HEK293 (cell line): ENCODE measurements at regions of chr19 and their contacts with region 1.

Region 1: GRCh38 chr19:36060430-36060829 is 5.7 kb downstream of the WDR62 start:
- H3K4me3 ChIP-seq: no peak overlapping the region
- H3K27ac ChIP-seq: peak overlapping the region; percentile 21; the same call in 1 of the 2 replicates
- H3K4me1 ChIP-seq: peaks cover 23% of the 10 kb centered on the region
- CTCF ChIP-seq: peak; percentile 97

Region 2: GRCh38 chr19:35925501-35925900 is 134.9 kb before region 1 on chr19:
- CTCF ChIA-PET with region 1: no interaction called
- POLR2A ChIA-PET with region 1: no interaction called
- H3K4me3 ChIP-seq: no peak overlapping the region
- H3K27ac ChIP-seq: no peak overlapping the region
- H3K4me1 ChIP-seq: no peaks in the 10 kb centered on the region
- CTCF ChIP-seq: no peak

Region 3: DNA sequence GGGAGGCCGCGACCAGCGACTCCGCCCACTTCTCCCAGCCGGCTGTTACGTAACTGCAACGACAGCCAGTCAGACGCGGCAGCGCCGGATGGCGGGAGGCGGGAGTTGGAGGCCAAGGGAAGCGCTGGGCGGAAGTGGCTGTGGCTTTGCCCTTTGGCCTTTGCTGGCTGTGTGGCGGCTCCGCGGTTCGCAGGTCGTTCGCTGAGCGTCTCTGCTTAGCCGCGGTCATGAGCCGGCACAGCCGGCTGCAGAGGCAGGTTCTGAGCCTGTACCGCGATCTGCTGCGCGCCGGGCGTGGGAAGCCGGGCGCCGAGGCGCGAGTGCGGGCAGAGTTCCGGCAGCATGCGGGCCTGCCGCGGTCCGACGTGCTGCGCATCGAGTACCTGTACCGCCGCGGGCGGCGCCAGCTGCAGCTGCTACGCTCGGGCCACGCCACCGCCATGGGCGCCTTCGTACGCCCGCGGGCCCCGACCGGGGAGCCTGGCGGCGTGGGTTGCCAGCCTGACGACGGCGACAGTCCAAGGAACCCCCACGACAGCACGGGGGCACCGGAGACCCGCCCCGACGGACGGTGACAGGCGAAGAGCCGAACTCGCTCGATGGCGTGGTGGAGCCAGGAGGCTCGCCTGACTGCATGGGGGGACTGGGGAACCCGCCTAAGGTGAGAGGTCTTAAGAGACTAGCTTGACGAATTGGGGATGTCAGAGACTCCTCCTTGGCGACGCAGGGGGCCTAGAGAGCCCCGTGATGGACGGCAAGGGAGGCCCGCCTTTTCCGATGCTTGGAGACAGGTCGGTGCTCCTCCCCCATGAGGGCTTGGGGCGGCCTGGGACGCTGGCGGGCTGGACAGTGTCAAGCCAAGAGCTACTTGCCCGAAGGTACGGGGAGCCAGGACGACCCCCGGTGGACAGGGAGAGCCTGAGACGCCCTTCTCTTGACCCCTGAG is 65.1 kb before region 1 on chr19 and contains the start of gene SDHAF1:
- CTCF ChIA-PET with region 1: interaction called, 10 read pairs
- POLR2A ChIA-PET with region 1: no interaction called
- H3K4me3 ChIP-seq: peak within 1 kb of the TSS; percentile 47
- H3K27ac ChIP-seq: peak within 1 kb of the TSS; percentile 84
- H3K4me1 ChIP-seq: peaks cover 21% of the 10 kb centered on the region
- CTCF ChIP-seq: no peak; the same call in 1 of the 2 replicates

Region 4: GRCh38 chr19:36073121-36073872 is 12.9 kb after region 1 on chr19:
- CTCF ChIA-PET with region 1: interaction called, 42 read pairs
- POLR2A ChIA-PET with region 1: interaction called, 41 read pairs
- H3K4me3 ChIP-seq: no peak overlapping the region
- H3K27ac ChIP-seq: peak overlapping the region; percentile 31; the same call in 1 of the 2 replicates
- H3K4me1 ChIP-seq: peaks cover 21% of the 10 kb centered on the region
- CTCF ChIP-seq: no peak

Region 5: GRCh38 chr19:36103626-36104552 is 43.5 kb after region 1 on chr19:
- CTCF ChIA-PET with region 1: interaction called, 22 read pairs
- POLR2A ChIA-PET with region 1: interaction called, 11 read pairs
- H3K4me3 ChIP-seq: no peak overlapping the region
- H3K27ac ChIP-seq: peak overlapping the region; percentile 7; the same call in 1 of the 2 replicates
- H3K4me1 ChIP-seq: no peaks in the 10 kb centered on the region
- CTCF ChIP-seq: no peak

Region 6: GRCh38 chr19:36132489-36132891 is 72.1 kb after region 1 on chr19:
- CTCF ChIA-PET with region 1: interaction called, 61 read pairs
- POLR2A ChIA-PET with region 1: interaction called, 15 read pairs
- H3K4me3 ChIP-seq: no peak overlapping the region
- H3K27ac ChIP-seq: no peak overlapping the region
- H3K4me1 ChIP-seq: peaks cover 12% of the 10 kb centered on the region
- CTCF ChIP-seq: no peak

Region 7: GRCh38 chr19:36169084-36169760 is 108.8 kb after region 1 on chr19:
- CTCF ChIA-PET with region 1: interaction called, 72 read pairs
- POLR2A ChIA-PET with region 1: interaction called, 7 read pairs
- H3K4me3 ChIP-seq: no peak overlapping the region
- H3K27ac ChIP-seq: peak overlapping the region; percentile 92
- H3K4me1 ChIP-seq: peaks cover 28% of the 10 kb centered on the region
- CTCF ChIP-seq: no peak